PC-3 (cell line): ENCODE measurements at regions of chr13 and their contacts with region 1.

Region 1: GRCh38 chr13:31909864-31910551 is 121.6 kb upstream of the FRY start:
- DNase-seq: peak; percentile 63
- ATAC-seq: peak; percentile 33; the same call in 1 of the 2 replicates
- H3K4me3 ChIP-seq: no peak overlapping the region
- H3K27ac ChIP-seq: no peak overlapping the region
- H3K4me1 ChIP-seq: peaks cover 11% of the 10 kb centered on the region
- H3K27me3 ChIP-seq: peaks cover 6% of the 10 kb centered on the region; the same call in 1 of the 2 replicates
- CTCF ChIP-seq: peak; percentile 89

Region 2: GRCh38 chr13:31649766-31650165 is 260.2 kb before region 1 on chr13:
- CTCF ChIA-PET with region 1: no interaction called
- POLR2A ChIA-PET with region 1: no interaction called
- intact Hi-C with region 1: no loop called
- DNase-seq: no peak
- ATAC-seq: no peak
- H3K4me3 ChIP-seq: no peak overlapping the region
- H3K27ac ChIP-seq: no peak overlapping the region
- H3K4me1 ChIP-seq: no peaks in the 10 kb centered on the region
- H3K27me3 ChIP-seq: peaks cover 6% of the 10 kb centered on the region; the same call in 1 of the 2 replicates
- CTCF ChIP-seq: no peak

Region 3: GRCh38 chr13:31699650-31700049 is 210.4 kb before region 1 on chr13:
- CTCF ChIA-PET with region 1: no interaction called
- POLR2A ChIA-PET with region 1: interaction called, 15 read pairs
- intact Hi-C with region 1: no loop called
- DNase-seq: no peak
- ATAC-seq: no peak
- H3K4me3 ChIP-seq: no peak overlapping the region
- H3K27ac ChIP-seq: no peak overlapping the region
- H3K4me1 ChIP-seq: no peaks in the 10 kb centered on the region
- H3K27me3 ChIP-seq: peaks cover 21% of the 10 kb centered on the region
- CTCF ChIP-seq: no peak